Activated T-helper 1 cell treated with anti-CD3 and anti-CD28 coated beads, Interleukin-12 subunit alpha, Interleukin-12 subunit beta, Interleukin-2, Interleukin-4 antibody, amounts not matched to agents 30 ng/mL and 10 ng/mL and 1 ng/mL, durations not matched to agents 14 hours and 24 hours and 36 hours (primary cell): ENCODE measurements at regions of chr12 and their contacts with region 1.

Region 1: GRCh38 chr12:47190271-47190750 is 110.6 kb upstream of the AMIGO2 start:
- DNase-seq: no peak
- H3K4me3 Mint-ChIP-seq: peak overlapping the region; percentile 24
- H3K27ac Mint-ChIP-seq: peak overlapping the region; percentile 71
- H3K4me1 Mint-ChIP-seq: peaks cover 69% of the 10 kb centered on the region
- H3K27me3 Mint-ChIP-seq: no peaks in the 10 kb centered on the region

Region 2: GRCh38 chr12:47111392-47111778 is 78.9 kb before region 1 on chr12:
- intact Hi-C with region 1: loop called (anchors 1 kb)
- DNase-seq: no peak
- H3K4me3 Mint-ChIP-seq: no peak overlapping the region
- H3K27ac Mint-ChIP-seq: peak overlapping the region; percentile 83
- H3K4me1 Mint-ChIP-seq: peaks cover 26% of the 10 kb centered on the region
- H3K27me3 Mint-ChIP-seq: no peaks in the 10 kb centered on the region

Region 3: DNA sequence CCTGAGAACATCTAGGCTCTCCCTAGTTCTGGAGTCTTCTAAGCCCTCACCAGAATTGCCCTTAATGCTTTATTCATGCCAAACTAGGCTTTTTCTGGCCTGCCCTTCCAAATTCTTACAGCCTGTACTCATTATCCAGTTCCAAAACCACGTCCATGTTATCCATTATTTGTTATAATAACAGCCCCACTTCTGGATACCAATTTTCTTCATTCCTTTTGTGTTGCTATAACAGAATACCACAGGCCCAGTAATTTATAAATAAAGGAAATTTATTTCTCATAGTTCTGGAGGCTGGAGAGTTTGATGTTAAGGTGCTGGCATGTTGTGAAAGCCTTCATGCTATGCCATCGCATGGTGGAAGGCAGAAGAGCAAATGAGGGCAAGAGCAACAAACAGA is 42.6 kb before region 1 on chr12:
- intact Hi-C with region 1: loop called (anchors 5 kb)
- DNase-seq: no peak
- H3K4me3 Mint-ChIP-seq: no peak overlapping the region
- H3K27ac Mint-ChIP-seq: no peak overlapping the region
- H3K4me1 Mint-ChIP-seq: peaks cover 21% of the 10 kb centered on the region
- H3K27me3 Mint-ChIP-seq: no peaks in the 10 kb centered on the region

Region 4: DNA sequence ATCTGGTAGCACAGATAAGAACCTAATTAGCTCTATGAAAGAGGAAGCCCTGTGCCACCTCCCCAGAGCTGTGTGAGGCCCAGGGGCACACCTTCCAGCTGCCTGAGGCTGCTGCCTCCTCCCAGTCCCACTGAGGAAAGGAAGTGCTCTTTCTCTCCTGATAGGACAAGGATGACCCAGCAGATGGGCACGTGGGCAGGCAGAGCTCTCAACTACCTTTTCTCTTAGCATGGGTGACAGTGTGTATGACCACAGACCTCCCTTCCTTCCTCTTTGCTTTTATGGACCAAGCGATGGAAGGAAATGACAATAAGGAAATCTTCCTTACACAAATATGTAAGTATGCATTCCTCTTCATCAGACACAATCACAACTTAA is 17.0 kb after region 1 on chr12:
- intact Hi-C with region 1: loop called (anchors 1 kb)
- DNase-seq: no peak
- H3K4me3 Mint-ChIP-seq: peak overlapping the region; percentile 70
- H3K27ac Mint-ChIP-seq: peak overlapping the region; percentile 85
- H3K4me1 Mint-ChIP-seq: peaks cover 71% of the 10 kb centered on the region
- H3K27me3 Mint-ChIP-seq: no peaks in the 10 kb centered on the region